Sciatic nerve (tissue), 2 donors: ENCODE measurements at regions of chr17 and their contacts with region 1.

Region 1: DNA sequence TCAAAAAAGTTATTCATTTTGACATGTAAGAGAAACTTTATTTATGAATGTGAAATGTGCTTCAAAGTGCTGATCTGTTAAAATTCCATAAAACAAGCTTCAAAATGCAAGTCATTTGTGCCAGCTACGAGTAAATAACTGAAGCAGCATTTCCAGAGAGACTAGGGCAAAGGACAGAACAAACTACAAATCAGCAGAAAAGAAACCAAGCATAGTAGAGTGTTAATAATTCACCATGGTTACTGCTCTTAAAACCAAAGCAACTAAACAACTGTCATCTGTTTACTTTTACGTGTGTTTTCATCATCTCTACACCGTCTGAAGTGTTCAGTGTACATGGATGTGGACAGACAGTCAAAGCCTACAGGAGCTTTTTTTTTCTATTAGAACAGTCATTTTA is 1.6 kb upstream of the ASPA start:
- DNase-seq: no peak
- ATAC-seq: peak; percentile 58

Region 2: DNA sequence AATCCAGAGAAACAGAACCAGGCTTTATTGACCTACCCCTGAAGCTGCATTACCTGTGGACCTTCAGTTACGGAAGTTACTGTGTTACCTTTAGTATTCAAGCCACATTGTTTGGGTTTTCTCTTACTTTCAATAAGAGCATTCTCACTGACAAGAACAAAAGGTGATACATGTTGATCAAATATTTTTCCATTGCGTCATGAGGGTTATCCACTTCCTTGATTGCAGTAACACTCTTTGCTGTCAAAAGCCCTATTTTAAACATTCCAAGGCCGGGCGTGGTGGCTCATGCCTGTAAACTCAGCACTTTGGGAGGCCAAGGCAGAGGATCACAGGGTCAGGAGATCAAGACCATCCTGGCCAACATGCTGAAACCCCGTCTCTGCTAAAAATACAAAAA is 909.3 kb before region 1 on chr17:
- intact Hi-C with region 1: no loop called
- DNase-seq: no peak
- ATAC-seq: no peak

Region 3: DNA sequence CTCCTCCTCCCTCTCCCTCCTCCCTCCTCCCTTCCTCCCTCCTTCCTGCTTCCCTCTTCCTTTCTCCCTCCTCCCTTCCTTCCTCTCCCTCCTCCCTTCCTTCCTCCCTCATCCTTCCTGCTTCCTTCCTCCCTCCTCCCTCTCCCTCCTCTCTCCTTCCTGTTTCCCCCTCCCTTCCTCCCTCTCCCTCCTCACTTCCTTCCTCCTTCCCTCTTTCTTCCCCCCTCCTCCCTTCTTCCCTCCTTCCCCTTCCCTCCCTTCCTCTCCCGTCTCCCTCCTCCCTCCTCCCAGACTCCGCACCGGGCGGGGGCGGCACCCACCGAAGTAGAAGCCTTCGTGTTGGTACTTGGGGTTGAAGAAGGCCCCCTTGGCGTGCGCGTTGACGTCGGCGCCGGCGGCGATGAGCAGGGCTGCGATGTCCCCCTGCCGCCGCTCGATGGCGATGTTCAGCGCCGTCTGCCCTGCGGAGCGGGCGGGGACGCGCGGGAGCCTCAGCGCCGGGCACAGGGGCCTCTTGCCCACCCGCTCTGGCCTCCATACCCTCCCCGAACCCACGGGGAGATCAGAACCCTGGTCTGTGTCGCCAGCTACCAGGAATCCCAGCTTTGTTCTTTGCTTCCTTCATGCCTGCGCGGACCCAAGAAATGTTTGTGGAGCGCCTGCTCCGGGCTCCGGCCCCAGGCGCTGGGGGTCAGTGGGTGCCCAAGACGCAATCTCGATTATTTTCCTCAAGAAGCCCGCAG is 61.2 kb after region 1 on chr17:
- intact Hi-C with region 1: loop called (anchors 10 kb)
- DNase-seq: peak; percentile 88
- ATAC-seq: peak; percentile 83